Left ventricle myocardium inferior (tissue), 1 donor: ENCODE measurements at regions of chr1 and their contacts with region 1.

Region 1: GRCh38 chr1:94079080-94079940 is 41.6 kb downstream of the ABCA4 start:
- DNase-seq: no peak
- H3K4me3 ChIP-seq: no peak overlapping the region
- H3K27ac ChIP-seq: no peak overlapping the region
- H3K4me1 ChIP-seq: no peaks in the 10 kb centered on the region
- H3K27me3 ChIP-seq: no peaks in the 10 kb centered on the region
- CTCF ChIP-seq: no peak

Region 2: GRCh38 chr1:94154989-94155388 is 75.7 kb after region 1 on chr1:
- intact Hi-C with region 1: loop called (anchors 10 kb)
- DNase-seq: no peak
- H3K4me3 ChIP-seq: no peak overlapping the region
- H3K27ac ChIP-seq: peak overlapping the region; percentile 65
- H3K4me1 ChIP-seq: peaks cover 5% of the 10 kb centered on the region
- H3K27me3 ChIP-seq: no peaks in the 10 kb centered on the region
- CTCF ChIP-seq: no peak